ENCODE measurements at regions of chr9 and their contacts with region 1.

Region 1: GRCh38 chr9:123997665-123998277 is 13.8 kb upstream of the LHX2 start:
- DNase-seq: peak in 2 of 14 experiments; percentile 70 to 71
- ATAC-seq: no peak
- H3K4me3 ChIP-seq: no peak overlapping the region
- H3K4me3 Mint-ChIP-seq: peak overlapping the region; percentile 74
- H3K27ac ChIP-seq: no peak overlapping the region
- H3K27ac Mint-ChIP-seq: no peak overlapping the region
- H3K4me1 ChIP-seq: peaks cover 23% of the 10 kb centered on the region
- H3K4me1 Mint-ChIP-seq: peaks cover 34% of the 10 kb centered on the region
- H3K27me3 ChIP-seq: peaks cover 52 to 76% of the 10 kb centered on the region in 2 experiments
- H3K27me3 Mint-ChIP-seq: peaks cover 84% of the 10 kb centered on the region
- CTCF ChIP-seq: no peak

Region 2: DNA sequence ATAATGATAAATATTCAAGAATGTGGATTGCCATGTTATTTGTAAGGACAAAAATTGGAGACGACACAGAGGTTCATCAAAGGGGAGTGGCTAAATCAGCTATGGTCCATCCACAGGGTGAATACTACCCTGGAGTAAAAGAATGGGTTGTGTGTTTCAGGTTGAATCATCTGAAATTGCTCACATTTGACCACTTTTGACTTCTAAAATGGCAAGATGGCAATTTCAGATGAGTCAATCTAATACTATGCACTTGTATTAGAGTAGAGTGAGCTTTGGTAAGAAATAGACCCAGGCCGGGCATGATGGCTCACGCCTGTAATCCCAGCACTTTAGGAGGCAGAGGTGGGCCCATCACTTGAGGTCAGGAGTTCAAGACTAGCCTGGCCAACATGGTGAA is 1395.7 kb after region 1 on chr9:
- CTCF ChIA-PET with region 1: no interaction called
- POLR2A ChIA-PET with region 1: no interaction called
- intact Hi-C with region 1: loop called in 1 of 2 experiments (anchors 10 kb)
- DNase-seq: no peak
- ATAC-seq: no peak
- H3K4me3 ChIP-seq: no peak overlapping the region
- H3K4me3 Mint-ChIP-seq: no peak overlapping the region
- H3K27ac ChIP-seq: no peak overlapping the region
- H3K27ac Mint-ChIP-seq: no peak overlapping the region
- H3K4me1 ChIP-seq: no peaks in the 10 kb centered on the region
- H3K4me1 Mint-ChIP-seq: no peaks in the 10 kb centered on the region
- H3K27me3 ChIP-seq: peaks cover 0 to 3% of the 10 kb centered on the region in 2 experiments
- H3K27me3 Mint-ChIP-seq: no peaks in the 10 kb centered on the region
- CTCF ChIP-seq: no peak